B cell (primary cell): ENCODE measurements at regions of chr17 and their contacts with region 1.

Region 1: DNA sequence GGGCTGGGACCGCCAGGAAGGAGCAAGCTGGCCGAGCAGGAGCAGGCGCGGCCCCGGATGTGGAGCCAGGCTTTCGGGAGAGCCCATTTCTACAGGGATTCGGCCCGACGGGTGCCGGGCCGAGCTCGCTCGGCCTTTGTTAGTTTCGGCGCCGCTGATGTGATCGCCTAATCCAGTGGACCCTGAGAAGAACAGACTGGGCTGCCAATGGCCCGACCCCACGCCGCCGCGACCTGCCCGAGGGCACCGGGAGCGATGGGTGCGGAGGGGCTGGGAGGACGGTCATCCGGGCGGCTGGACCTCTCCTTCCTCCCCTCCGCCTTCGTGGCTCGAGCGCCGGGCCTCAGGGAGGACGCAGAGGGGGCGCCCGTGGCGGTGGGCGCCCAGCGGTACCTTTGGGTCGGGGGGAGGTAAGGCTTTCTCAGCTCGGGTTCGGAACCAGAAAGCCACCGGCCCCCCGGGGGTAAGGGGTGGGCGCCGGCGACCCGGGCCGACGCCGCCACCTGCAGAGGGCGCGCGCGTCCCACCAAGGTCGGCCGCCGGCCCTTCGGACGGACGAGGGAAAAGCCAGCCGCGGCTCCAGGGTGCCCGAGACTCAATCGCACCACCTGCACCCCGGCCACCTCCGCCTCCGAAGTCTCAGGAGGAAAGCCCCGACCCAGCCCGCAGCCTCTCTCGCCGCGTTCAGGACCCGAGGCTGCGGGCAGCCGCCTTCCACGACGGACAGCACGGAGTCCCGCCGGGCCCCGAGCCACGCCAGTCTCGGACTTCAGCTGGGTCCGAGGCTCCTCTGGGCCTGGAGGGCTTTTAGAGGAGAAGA is 7.1 kb downstream of the CBX8 start:
- DNase-seq: peak; percentile 66
- ATAC-seq: peak; percentile 68
- H3K4me3 ChIP-seq: peak overlapping the region in 3 of 5 experiments; percentile 12 to 27 (median 12)
- H3K4me3 Mint-ChIP-seq: peak overlapping the region; percentile 44
- H3K27ac ChIP-seq: no peak overlapping the region
- H3K27ac Mint-ChIP-seq: no peak overlapping the region
- H3K4me1 ChIP-seq: peaks cover 28 to 29% of the 10 kb centered on the region in 2 donors
- H3K4me1 Mint-ChIP-seq: peaks cover 13% of the 10 kb centered on the region
- H3K27me3 ChIP-seq: peaks cover 0 to 77% (median 48%) of the 10 kb centered on the region in 4 experiments
- H3K27me3 Mint-ChIP-seq: peaks cover 54% of the 10 kb centered on the region
- CTCF ChIP-seq: peak; percentile 67

Region 2: GRCh38 chr17:79777894-79778503 is 11.7 kb before region 1 on chr17 and contains the start of gene CBX2:
- CTCF ChIA-PET with region 1: interaction called, 30 read pairs
- POLR2A ChIA-PET with region 1: interaction called, 3 read pairs
- intact Hi-C with region 1: no loop called
- DNase-seq: peak; percentile 87
- ATAC-seq: peak; percentile 90
- H3K4me3 ChIP-seq: peak within 1 kb of the TSS; percentile 7 to 66 (median 51)
- H3K4me3 Mint-ChIP-seq: peak within 1 kb of the TSS; percentile 88
- H3K27ac ChIP-seq: no peak within 1 kb of the TSS
- H3K27ac Mint-ChIP-seq: peak within 1 kb of the TSS; percentile 69
- H3K4me1 ChIP-seq: peaks cover 27 to 40% of the 10 kb centered on the region in 2 donors
- H3K4me1 Mint-ChIP-seq: peaks cover 24% of the 10 kb centered on the region
- H3K27me3 ChIP-seq: peaks cover 0 to 84% (median 50%) of the 10 kb centered on the region in 4 experiments
- H3K27me3 Mint-ChIP-seq: peaks cover 74% of the 10 kb centered on the region
- CTCF ChIP-seq: no peak
- total RNA-seq, gene CBX2: 0.07 and 0.47 TPM in 2 replicates

Region 3: GRCh38 chr17:79844869-79845600 is 55.3 kb after region 1 on chr17:
- CTCF ChIA-PET with region 1: interaction called, 20 read pairs
- POLR2A ChIA-PET with region 1: interaction called, 4 read pairs
- intact Hi-C with region 1: no loop called
- DNase-seq: peak; percentile 75
- ATAC-seq: peak; percentile 74
- H3K4me3 ChIP-seq: peak overlapping the region in 1 of 5 experiments; percentile 8
- H3K4me3 Mint-ChIP-seq: peak overlapping the region; percentile 52
- H3K27ac ChIP-seq: no peak overlapping the region
- H3K27ac Mint-ChIP-seq: no peak overlapping the region
- H3K4me1 ChIP-seq: peaks cover 53 to 56% of the 10 kb centered on the region in 2 donors
- H3K4me1 Mint-ChIP-seq: peaks cover 35% of the 10 kb centered on the region
- H3K27me3 ChIP-seq: peaks cover 0 to 83% (median 43%) of the 10 kb centered on the region in 4 experiments
- H3K27me3 Mint-ChIP-seq: peaks cover 37% of the 10 kb centered on the region
- CTCF ChIP-seq: peak; percentile 90

Region 4: GRCh38 chr17:79855331-79856124 is 65.8 kb after region 1 on chr17:
- CTCF ChIA-PET with region 1: no interaction called
- POLR2A ChIA-PET with region 1: no interaction called
- intact Hi-C with region 1: no loop called
- DNase-seq: no peak
- ATAC-seq: no peak
- H3K4me3 ChIP-seq: no peak overlapping the region
- H3K4me3 Mint-ChIP-seq: no peak overlapping the region
- H3K27ac ChIP-seq: no peak overlapping the region
- H3K27ac Mint-ChIP-seq: no peak overlapping the region
- H3K4me1 ChIP-seq: peaks cover 3 to 9% of the 10 kb centered on the region in 2 donors
- H3K4me1 Mint-ChIP-seq: peaks cover 4% of the 10 kb centered on the region
- H3K27me3 ChIP-seq: peaks cover 0 to 19% (median 0%) of the 10 kb centered on the region in 4 experiments
- H3K27me3 Mint-ChIP-seq: peaks cover 28% of the 10 kb centered on the region
- CTCF ChIP-seq: no peak

Region 5: GRCh38 chr17:79915850-79916430 is 126.2 kb after region 1 on chr17:
- CTCF ChIA-PET with region 1: interaction called, 8 read pairs
- POLR2A ChIA-PET with region 1: no interaction called
- intact Hi-C with region 1: loop called (anchors 5 kb)
- DNase-seq: peak; percentile 53
- ATAC-seq: no peak
- H3K4me3 ChIP-seq: no peak overlapping the region
- H3K4me3 Mint-ChIP-seq: no peak overlapping the region
- H3K27ac ChIP-seq: no peak overlapping the region
- H3K27ac Mint-ChIP-seq: no peak overlapping the region
- H3K4me1 ChIP-seq: peaks cover 0 to 3% of the 10 kb centered on the region in 2 donors
- H3K4me1 Mint-ChIP-seq: peaks cover 10% of the 10 kb centered on the region
- H3K27me3 ChIP-seq: peaks cover 0 to 10% (median 2%) of the 10 kb centered on the region in 4 experiments
- H3K27me3 Mint-ChIP-seq: peaks cover 17% of the 10 kb centered on the region
- CTCF ChIP-seq: no peak

Region 6: DNA sequence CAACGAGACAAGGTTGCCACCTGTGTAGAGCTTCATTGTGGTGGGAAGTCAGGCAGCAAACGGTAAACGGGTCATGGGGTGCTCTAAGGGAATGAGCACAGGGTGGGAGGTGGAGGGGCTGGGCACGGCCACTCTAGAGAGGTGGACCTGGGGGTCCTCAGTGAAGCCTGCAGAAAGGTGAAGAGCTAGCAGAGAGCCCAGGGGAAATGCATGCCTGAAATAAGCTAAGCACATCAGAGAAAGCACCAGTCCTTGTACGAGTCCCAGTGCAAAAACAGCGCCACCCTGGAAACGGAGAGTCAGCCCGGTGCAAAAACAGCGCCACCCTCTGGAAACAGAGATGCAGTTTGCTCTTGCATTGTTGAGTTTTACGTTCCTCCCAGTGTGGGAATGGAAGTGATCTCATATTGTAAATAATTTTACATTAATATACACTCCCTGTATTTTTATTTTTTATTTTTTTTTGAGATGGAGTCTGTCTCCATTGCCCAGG is 180.9 kb after region 1 on chr17:
- CTCF ChIA-PET with region 1: interaction called, 14 read pairs
- POLR2A ChIA-PET with region 1: no interaction called
- intact Hi-C with region 1: loop called (anchors 2 kb)
- DNase-seq: peak; percentile 77
- ATAC-seq: peak; percentile 45
- H3K4me3 ChIP-seq: no peak overlapping the region
- H3K4me3 Mint-ChIP-seq: no peak overlapping the region
- H3K27ac ChIP-seq: no peak overlapping the region
- H3K27ac Mint-ChIP-seq: peak overlapping the region; percentile 26
- H3K4me1 ChIP-seq: peaks cover 22 to 24% of the 10 kb centered on the region in 2 donors
- H3K4me1 Mint-ChIP-seq: peaks cover 30% of the 10 kb centered on the region
- H3K27me3 ChIP-seq: no peaks in the 10 kb centered on the region
- H3K27me3 Mint-ChIP-seq: no peaks in the 10 kb centered on the region
- CTCF ChIP-seq: peak; percentile 64

Region 7: DNA sequence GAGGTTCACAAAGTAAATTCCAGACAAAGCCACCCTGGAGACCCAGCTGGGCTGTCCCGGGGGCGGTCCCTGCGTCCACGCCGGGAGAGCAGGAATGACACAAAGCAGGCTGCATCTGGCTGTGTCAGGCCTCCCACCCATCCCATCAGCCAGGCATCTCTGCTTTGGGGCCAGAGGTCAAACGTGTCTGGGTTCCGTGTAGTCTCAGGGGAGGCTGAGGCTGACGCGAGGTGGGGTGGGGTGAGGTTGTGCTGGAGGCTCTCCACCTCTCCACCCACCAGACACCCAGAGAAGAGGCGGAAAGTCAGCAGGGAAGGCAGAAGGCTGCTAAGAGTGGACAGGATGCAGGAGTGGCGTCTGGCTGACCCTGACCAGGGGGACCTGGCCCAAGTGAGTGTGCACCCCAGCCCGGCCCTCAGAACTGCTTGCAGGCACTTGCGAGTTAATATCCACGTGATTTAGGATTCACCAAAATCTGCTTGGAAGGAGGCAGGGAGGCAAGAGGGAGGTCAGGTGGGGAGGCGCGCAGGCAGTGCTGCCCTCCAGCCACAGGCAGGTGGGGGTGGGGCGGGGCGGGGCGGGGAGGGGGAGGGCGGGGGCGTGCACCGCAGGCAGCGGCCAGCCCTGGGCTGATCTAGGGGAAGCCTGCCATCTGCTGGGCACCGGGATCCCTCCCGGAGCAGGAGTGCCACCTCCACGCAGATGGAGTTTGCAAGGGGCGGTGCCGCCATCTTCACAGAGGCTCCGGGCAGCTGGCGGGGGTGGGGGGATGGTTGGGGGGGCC is 201.6 kb after region 1 on chr17:
- CTCF ChIA-PET with region 1: interaction called, 15 read pairs
- POLR2A ChIA-PET with region 1: no interaction called
- intact Hi-C with region 1: no loop called
- DNase-seq: peak; percentile 83
- ATAC-seq: peak; percentile 98
- H3K4me3 ChIP-seq: peak overlapping the region in 4 of 5 experiments; percentile 46 to 58 (median 57)
- H3K4me3 Mint-ChIP-seq: peak overlapping the region; percentile 72
- H3K27ac ChIP-seq: no peak overlapping the region
- H3K27ac Mint-ChIP-seq: no peak overlapping the region
- H3K4me1 ChIP-seq: peaks cover 24 to 31% of the 10 kb centered on the region in 2 donors
- H3K4me1 Mint-ChIP-seq: peaks cover 27% of the 10 kb centered on the region
- H3K27me3 ChIP-seq: peaks cover 0 to 18% (median 0%) of the 10 kb centered on the region in 4 experiments
- H3K27me3 Mint-ChIP-seq: peaks cover 5% of the 10 kb centered on the region
- CTCF ChIP-seq: peak; percentile 66